IMR-90 (cell line): ENCODE measurements at regions of chr1 and their contacts with region 1.

Region 1: GRCh38 chr1:117209094-117209493 is 1.6 kb downstream of the VTCN1 start:
- DNase-seq: no peak
- ATAC-seq: no peak
- H3K4me3 ChIP-seq: no peak overlapping the region
- H3K27ac ChIP-seq: no peak overlapping the region
- H3K4me1 ChIP-seq: no peaks in the 10 kb centered on the region
- H3K27me3 ChIP-seq: peaks cover 30% of the 10 kb centered on the region
- CTCF ChIP-seq: no peak
- POLR2A ChIP-seq: no peak
- RAD21 ChIP-seq: no peak

Region 2: GRCh38 chr1:117156505-117156904 is 52.6 kb before region 1 on chr1:
- CTCF ChIA-PET with region 1: no interaction called
- POLR2A ChIA-PET with region 1: no interaction called
- dilution Hi-C with region 1: no loop called
- in situ Hi-C with region 1: loop called (anchors 5 kb)
- intact Hi-C with region 1: no loop called
- DNase-seq: no peak
- ATAC-seq: no peak
- H3K4me3 ChIP-seq: no peak overlapping the region
- H3K27ac ChIP-seq: no peak overlapping the region
- H3K4me1 ChIP-seq: no peaks in the 10 kb centered on the region
- H3K27me3 ChIP-seq: peaks cover 9% of the 10 kb centered on the region
- CTCF ChIP-seq: no peak
- POLR2A ChIP-seq: no peak
- RAD21 ChIP-seq: no peak

Region 3: GRCh38 chr1:117541003-117541402 is 331.9 kb after region 1 on chr1:
- CTCF ChIA-PET with region 1: no interaction called
- POLR2A ChIA-PET with region 1: no interaction called
- dilution Hi-C with region 1: no loop called
- in situ Hi-C with region 1: no loop called
- intact Hi-C with region 1: no loop called
- DNase-seq: no peak
- ATAC-seq: no peak
- H3K4me3 ChIP-seq: no peak overlapping the region
- H3K27ac ChIP-seq: no peak overlapping the region
- H3K4me1 ChIP-seq: peaks cover 5% of the 10 kb centered on the region; the same call in 1 of the 2 replicates
- H3K27me3 ChIP-seq: no peaks in the 10 kb centered on the region
- CTCF ChIP-seq: no peak
- POLR2A ChIP-seq: no peak
- RAD21 ChIP-seq: no peak